HEK293T (cell line): ENCODE measurements at regions of chr5 and their contacts with region 1.

Region 1: DNA sequence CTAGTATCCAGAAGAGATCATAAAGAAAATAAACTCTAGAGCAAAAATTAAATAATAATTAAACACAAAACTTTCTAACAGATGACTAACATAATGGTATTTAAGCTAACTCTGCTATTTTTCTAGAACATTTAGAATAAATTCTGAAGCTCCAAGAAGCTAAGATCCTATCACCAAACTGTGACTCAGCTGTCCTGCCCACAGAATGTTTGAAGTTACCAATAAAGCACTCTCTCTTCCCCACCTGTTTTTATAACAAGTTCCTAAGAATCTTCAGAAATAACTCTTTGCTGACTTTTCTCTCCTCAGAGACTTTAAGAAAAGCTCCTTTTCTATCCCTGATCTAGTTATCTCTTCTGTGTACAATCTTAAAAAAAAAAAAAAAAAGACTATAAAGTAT is 6.0 kb upstream of the EFNA5 start:
- DNase-seq: no peak

Region 2: DNA sequence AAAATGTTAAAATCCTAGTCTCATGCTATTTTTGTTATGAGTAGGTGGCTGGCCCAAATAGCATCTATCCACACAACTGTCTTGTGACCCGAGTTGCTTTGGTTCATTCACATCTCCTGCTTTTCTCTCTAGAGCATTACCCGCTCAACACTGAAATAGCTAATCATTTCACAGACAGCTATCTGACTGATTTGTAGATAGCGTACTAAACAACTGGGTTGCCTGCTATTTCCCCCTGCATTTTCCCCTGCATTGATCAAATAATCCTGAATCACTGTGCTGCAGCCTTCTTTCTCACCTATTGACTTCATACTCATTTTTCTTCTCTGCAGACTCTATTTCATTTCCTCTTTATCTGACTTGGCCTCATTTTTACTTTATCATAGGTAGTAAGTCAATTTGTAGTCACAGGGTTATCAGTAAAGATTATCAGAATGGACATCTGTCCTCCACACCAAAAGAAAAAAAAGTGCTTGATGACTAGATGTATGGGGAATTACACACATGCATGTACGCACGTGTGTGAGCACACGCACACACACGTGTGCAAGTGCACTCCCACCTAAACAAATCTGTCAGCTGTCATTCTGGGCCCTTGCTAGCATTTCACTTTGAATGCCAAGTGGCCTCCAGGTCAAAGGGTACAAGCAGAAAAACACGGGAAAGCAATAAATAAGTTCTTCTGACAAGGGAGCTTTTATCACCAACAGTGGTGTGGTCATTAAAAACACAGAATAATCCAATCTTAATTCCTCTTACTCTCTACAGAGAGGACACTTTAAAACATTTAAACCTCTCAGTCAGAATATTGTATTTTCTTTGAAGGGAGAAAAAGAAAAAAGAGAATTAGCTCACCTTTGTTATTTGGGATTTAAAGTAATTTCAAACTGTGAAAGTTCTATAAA is 507.6 kb before region 1 on chr5:
- CTCF ChIA-PET with region 1: interaction called, 10 read pairs
- POLR2A ChIA-PET with region 1: no interaction called
- DNase-seq: no peak